ENCODE measurements at regions of chr17 and their contacts with region 1.

Region 1: GRCh38 chr17:28405632-28406472 is at the start of gene SLC46A1:
- H3K4me3 Mint-ChIP-seq: peak within 1 kb of the TSS; percentile 86
- H3K27ac Mint-ChIP-seq: peak within 1 kb of the TSS; percentile 74
- H3K4me1 Mint-ChIP-seq: peaks cover 57% of the 10 kb centered on the region
- H3K27me3 Mint-ChIP-seq: peaks cover 7% of the 10 kb centered on the region

Region 2: GRCh38 chr17:28230011-28230410 is 175.8 kb before region 1 on chr17:
- intact Hi-C with region 1: loop called (anchors 10 kb)
- H3K4me3 Mint-ChIP-seq: no peak overlapping the region
- H3K27ac Mint-ChIP-seq: no peak overlapping the region
- H3K4me1 Mint-ChIP-seq: peaks cover 9% of the 10 kb centered on the region
- H3K27me3 Mint-ChIP-seq: peaks cover 68% of the 10 kb centered on the region